ENCODE measurements at regions of chr9 and their contacts with region 1.

Region 1: GRCh38 chr9:109098171-109098959 is 21.4 kb downstream of the TMEM245 start:
- DNase-seq: no peak
- H3K4me3 ChIP-seq: peak overlapping the region; percentile 23 to 27
- H3K27ac ChIP-seq: peak overlapping the region; percentile 54 to 60
- H3K4me1 ChIP-seq: peaks cover 4 to 38% of the 10 kb centered on the region in 2 donors
- H3K27me3 ChIP-seq: no peaks in the 10 kb centered on the region
- CTCF ChIP-seq: peak in 1 of 3 experiments; percentile 28

Region 2: DNA sequence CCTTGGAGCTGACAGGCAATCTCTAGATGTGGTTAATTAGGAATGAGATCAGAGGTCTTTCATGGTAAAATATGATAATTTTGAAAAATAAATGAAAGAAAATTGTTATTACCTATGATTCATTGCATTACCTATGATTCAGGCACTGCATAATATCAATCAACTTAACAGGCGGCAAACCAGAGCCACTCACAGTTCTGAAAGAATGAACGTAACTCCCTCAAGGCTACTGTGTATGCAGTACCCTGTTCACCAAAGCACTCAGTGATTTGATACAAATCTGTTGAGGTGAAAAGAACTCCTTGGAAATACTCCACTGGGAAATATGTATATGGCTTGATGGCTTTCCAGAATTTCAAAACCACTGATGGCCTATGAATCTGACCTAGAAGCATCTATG is 641.5 kb before region 1 on chr9:
- intact Hi-C with region 1: no loop called
- DNase-seq: no peak
- H3K4me3 ChIP-seq: no peak overlapping the region
- H3K27ac ChIP-seq: no peak overlapping the region
- H3K4me1 ChIP-seq: no peaks in the 10 kb centered on the region
- H3K27me3 ChIP-seq: no peaks in the 10 kb centered on the region
- CTCF ChIP-seq: no peak

Region 3: DNA sequence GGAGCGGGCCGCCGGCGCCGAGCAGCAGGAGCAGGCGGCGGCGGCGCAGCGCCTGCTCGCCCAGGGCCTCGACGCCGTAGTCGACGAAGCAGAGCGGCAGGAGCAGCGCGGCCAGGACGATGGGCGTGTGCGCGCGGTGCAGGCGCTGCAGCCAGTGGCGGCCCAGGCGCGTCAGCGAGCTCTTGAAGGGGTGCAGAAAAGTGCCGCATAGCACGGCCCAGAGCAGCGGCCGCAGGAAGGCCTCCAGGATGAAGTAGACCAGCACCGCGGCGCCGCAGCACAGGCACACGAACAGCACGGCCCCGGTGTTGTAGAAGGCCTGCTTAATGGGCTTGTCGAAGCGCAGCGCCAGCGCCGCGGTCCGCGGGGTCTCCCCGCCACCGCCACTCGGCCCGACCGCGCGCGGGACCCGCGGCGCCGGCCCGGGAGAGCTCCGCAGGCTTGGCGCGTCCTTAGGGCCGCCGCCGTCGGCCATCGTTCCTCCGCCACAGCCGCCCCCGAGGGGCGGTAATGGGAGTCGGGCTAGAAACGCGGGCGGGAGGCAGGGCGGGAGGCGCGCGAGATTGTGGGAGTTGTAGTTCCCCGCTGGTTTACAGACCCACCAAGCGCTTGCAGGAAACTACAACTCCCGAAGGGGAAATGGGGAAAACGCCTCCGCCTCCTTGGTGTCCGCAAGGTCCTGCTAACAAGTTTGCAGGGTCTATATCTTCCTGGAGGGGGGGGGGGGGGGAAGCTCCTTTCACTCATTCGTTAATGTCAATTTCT is 21.3 kb after region 1 on chr9 and contains the start of gene TMEM245:
- intact Hi-C with region 1: loop called (anchors 2 kb)
- DNase-seq: peak; percentile 94 to 98
- H3K4me3 ChIP-seq: peak within 1 kb of the TSS; percentile 83 to 98
- H3K27ac ChIP-seq: peak within 1 kb of the TSS; percentile 56 to 77
- H3K4me1 ChIP-seq: peaks cover 9 to 34% of the 10 kb centered on the region in 2 donors
- H3K27me3 ChIP-seq: no peaks in the 10 kb centered on the region
- CTCF ChIP-seq: no peak
- total RNA-seq, gene TMEM245: 49.7 TPM